Posterior cingulate gyrus (tissue), 11 donors: ENCODE measurements at regions of chr11 and their contacts with region 1.

Region 1: GRCh38 chr11:46537537-46538295 is 56.1 kb downstream of the AMBRA1 start:
- DNase-seq: peak in 8 of 10 donors; percentile 34 to 93 (median 58)

Region 2: DNA sequence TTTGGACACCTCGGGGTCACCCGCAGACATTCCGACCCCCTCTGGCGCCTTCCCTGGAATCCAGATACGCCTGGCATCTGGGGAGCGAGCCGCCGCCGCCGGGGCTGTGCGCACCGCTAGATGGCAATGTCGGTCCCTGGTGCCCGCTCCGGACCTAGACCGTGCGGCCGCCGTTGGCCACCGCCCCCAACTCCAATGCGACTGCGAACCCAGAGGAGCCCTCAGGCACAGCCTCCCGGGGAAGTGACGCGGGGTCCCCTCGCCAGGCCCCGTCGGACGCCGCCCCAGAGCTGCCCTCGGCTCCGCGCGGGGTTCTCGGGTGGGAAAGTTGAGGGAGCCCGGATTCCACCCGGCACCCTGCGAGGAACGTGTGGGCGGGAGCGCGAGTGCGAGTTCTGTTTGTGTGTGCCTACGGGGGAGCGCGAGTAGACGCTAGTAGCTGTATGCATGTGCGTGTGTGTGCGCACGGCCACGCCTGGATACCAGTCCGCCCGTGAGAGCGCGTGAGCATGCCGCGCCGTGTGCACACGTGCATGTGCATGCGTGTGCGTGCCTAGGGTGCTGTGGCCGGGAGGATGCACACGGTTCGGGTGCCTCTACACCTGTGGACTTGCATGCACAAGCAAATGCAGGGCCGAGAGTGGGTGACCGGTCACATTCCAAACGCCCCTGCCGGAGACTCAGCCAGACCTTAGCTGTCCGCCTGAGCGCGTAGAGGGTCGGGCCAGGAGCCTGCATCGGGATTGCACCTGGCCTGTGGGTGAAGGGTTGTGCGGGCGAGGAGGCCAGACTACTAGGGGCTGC is 148.1 kb before region 1 on chr11:
- intact Hi-C with region 1: loop called (anchors 2 kb)
- DNase-seq: peak; percentile 66 to 96 (median 80)

Region 3: GRCh38 chr11:46593550-46594373 is 56.0 kb after region 1 on chr11 and contains the start of gene AMBRA1:
- intact Hi-C with region 1: loop called (anchors 10 kb)
- DNase-seq: peak; percentile 77 to 98 (median 89)